ENCODE measurements at regions of chr12 and their contacts with region 1.

Region 1: DNA sequence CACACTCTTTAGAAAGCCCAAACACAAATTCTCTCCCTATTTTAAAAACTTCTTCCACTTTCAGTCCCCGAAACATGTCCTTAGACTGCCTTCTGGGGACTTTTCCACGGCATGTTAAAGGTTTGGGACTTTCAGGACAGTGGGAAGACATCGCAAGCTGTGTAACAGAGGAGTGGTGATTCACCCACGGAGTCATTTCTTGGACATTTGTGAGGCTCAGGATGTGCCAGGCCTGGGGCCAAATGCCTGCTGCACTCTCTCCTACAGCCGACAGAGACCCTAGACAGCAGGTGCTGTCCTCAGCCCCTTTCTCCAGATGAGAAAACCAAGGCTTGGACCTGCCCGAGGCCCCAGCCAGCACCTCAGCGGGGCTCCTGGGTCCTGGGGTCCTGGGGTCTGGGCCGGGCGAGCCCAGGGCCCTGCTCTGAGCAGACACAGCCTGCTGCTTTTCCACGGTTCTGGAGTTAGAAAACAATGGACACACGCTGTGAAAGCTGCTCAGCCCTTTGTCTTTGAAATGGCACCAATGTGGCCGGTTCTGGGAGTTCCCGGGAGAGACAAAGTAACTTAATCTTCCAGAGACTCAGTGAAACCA is 370.2 kb upstream of the SFSWAP start:
- DNase-seq: no peak
- ATAC-seq: no peak
- H3K4me3 ChIP-seq: no peak overlapping the region
- H3K4me3 Mint-ChIP-seq: no peak overlapping the region
- H3K27ac ChIP-seq: no peak overlapping the region
- H3K27ac Mint-ChIP-seq: no peak overlapping the region
- H3K4me1 ChIP-seq: no peaks in the 10 kb centered on the region
- H3K4me1 Mint-ChIP-seq: no peaks in the 10 kb centered on the region
- H3K27me3 ChIP-seq: no peaks in the 10 kb centered on the region
- H3K27me3 Mint-ChIP-seq: no peaks in the 10 kb centered on the region
- CTCF ChIP-seq: no peak

Region 2: GRCh38 chr12:131621701-131622421 is 281.1 kb after region 1 on chr12:
- CTCF ChIA-PET with region 1: no interaction called
- POLR2A ChIA-PET with region 1: no interaction called
- intact Hi-C with region 1: loop called in 1 of 2 experiments (anchors 5 kb)
- DNase-seq: no peak
- ATAC-seq: no peak
- H3K4me3 ChIP-seq: no peak overlapping the region
- H3K4me3 Mint-ChIP-seq: no peak overlapping the region
- H3K27ac ChIP-seq: no peak overlapping the region
- H3K27ac Mint-ChIP-seq: no peak overlapping the region
- H3K4me1 ChIP-seq: peaks cover 7% of the 10 kb centered on the region
- H3K4me1 Mint-ChIP-seq: peaks cover 8% of the 10 kb centered on the region
- H3K27me3 ChIP-seq: no peaks in the 10 kb centered on the region
- H3K27me3 Mint-ChIP-seq: peaks cover 7% of the 10 kb centered on the region
- CTCF ChIP-seq: no peak